Activated CD4-positive, alpha-beta memory T cell treated with anti-CD3 and anti-CD28 coated beads for 36 hours (primary cell): ENCODE measurements at regions of chr10 and their contacts with region 1.

Region 1: DNA sequence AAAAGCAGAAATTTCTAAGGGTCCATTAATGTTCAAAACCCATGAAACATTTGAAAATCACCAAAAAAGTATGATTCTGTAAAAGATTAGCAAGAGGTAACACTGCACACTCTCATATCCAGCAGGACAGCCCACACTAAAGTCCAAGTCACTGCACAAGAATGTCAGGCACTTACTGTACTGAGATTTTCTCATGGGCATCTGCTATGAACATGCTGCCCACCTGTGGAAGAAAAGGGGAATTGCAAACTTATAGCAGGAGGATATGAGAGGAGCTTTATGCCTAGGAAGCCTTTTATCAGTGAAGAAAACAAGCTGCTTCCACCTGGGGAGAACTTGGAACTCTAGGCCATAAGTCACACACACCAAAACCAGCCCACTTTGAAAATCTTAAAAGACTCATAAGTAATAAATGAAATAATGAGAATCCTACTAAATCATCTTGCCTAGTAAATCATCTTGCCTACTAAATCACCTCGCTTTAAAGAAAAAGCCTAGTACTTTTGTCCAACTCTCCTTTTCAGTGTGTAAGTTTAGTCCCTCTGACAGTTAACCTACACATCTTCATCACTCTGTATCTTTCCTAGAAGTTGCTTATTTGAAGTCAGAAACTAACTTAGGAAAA is 46.1 kb downstream of the ARMH3 start:
- DNase-seq: peak; percentile 40
- H3K4me3 Mint-ChIP-seq: no peak overlapping the region
- H3K27ac Mint-ChIP-seq: no peak overlapping the region
- H3K4me1 Mint-ChIP-seq: no peaks in the 10 kb centered on the region
- H3K27me3 Mint-ChIP-seq: no peaks in the 10 kb centered on the region

Region 2: DNA sequence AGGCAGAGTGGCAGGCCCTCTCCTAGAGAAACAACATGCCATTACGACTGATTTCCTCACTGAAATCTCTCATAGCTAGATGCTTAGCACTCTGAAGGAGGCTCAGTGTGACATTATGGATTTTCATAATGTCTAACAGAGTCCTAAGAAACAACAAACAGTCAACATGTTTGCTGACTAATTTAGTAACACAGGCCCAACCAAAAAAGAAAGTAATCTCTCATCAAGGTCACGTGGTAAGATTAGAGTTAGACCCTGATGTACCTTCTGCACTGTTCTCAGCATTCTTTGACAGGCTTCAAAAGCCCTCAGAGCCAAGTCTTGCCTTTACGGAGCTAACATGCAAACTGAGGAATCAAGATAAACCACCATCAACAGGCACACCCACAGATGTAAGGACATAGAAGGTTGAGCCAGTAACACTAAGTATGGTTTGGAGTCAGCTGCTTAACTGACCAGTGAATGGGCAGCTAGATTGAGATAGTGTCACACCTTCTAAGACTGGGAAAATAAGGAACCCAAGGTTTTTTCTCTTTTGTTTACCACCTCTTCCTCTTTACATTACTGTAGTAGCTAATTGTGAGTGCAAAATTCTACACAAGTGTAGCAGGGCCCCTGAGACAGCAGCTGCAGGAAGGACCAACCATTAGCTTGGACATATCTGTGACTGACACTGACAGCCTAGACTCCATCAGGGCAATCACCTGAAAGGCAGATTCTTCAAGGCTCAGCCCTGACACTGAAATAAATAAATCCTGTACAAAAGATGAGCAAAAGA is 151.0 kb before region 1 on chr10:
- CTCF ChIA-PET with region 1: interaction called, 17 read pairs
- POLR2A ChIA-PET with region 1: no interaction called
- intact Hi-C with region 1: no loop called
- DNase-seq: no peak
- H3K4me3 Mint-ChIP-seq: no peak overlapping the region
- H3K27ac Mint-ChIP-seq: no peak overlapping the region
- H3K4me1 Mint-ChIP-seq: peaks cover 8% of the 10 kb centered on the region
- H3K27me3 Mint-ChIP-seq: no peaks in the 10 kb centered on the region

Region 3: GRCh38 chr10:101995451-101996063 is 14.4 kb before region 1 on chr10:
- CTCF ChIA-PET with region 1: interaction called, 30 read pairs
- POLR2A ChIA-PET with region 1: no interaction called
- intact Hi-C with region 1: no loop called
- DNase-seq: no peak
- H3K4me3 Mint-ChIP-seq: no peak overlapping the region
- H3K27ac Mint-ChIP-seq: no peak overlapping the region
- H3K4me1 Mint-ChIP-seq: peaks cover 9% of the 10 kb centered on the region
- H3K27me3 Mint-ChIP-seq: no peaks in the 10 kb centered on the region

Region 4: GRCh38 chr10:102045292-102045691 is 35.4 kb after region 1 on chr10:
- CTCF ChIA-PET with region 1: interaction called, 11 read pairs
- POLR2A ChIA-PET with region 1: no interaction called
- intact Hi-C with region 1: no loop called
- DNase-seq: no peak
- H3K4me3 Mint-ChIP-seq: no peak overlapping the region
- H3K27ac Mint-ChIP-seq: no peak overlapping the region
- H3K4me1 Mint-ChIP-seq: peaks cover 34% of the 10 kb centered on the region
- H3K27me3 Mint-ChIP-seq: no peaks in the 10 kb centered on the region

Region 5: GRCh38 chr10:102072673-102073527 is 63.0 kb after region 1 on chr10:
- CTCF ChIA-PET with region 1: interaction called, 22 read pairs
- POLR2A ChIA-PET with region 1: interaction called, 3 read pairs
- intact Hi-C with region 1: loop called (anchors 10 kb)
- DNase-seq: peak; percentile 86
- H3K4me3 Mint-ChIP-seq: no peak overlapping the region
- H3K27ac Mint-ChIP-seq: no peak overlapping the region
- H3K4me1 Mint-ChIP-seq: peaks cover 6% of the 10 kb centered on the region
- H3K27me3 Mint-ChIP-seq: no peaks in the 10 kb centered on the region